Esophagus squamous epithelium (tissue), 5 donors: ENCODE measurements at regions of chr7 and their contacts with region 1.

Region 1: GRCh38 chr7:37181550-37181932 is 267.1 kb downstream of the ELMO1 start:
- DNase-seq: no peak
- H3K4me3 ChIP-seq: no peak overlapping the region
- H3K27ac ChIP-seq: no peak overlapping the region
- H3K4me1 ChIP-seq: peaks cover 0 to 10% (median 2%) of the 10 kb centered on the region in 3 donors
- H3K27me3 ChIP-seq: no peaks in the 10 kb centered on the region
- CTCF ChIP-seq: no peak
- POLR2A ChIP-seq: no peak

Region 2: GRCh38 chr7:36487756-36488336 is 693.7 kb before region 1 on chr7:
- intact Hi-C with region 1: loop called (anchors 5 kb)
- DNase-seq: no peak
- H3K4me3 ChIP-seq: no peak overlapping the region
- H3K27ac ChIP-seq: no peak overlapping the region
- H3K4me1 ChIP-seq: peaks cover 0 to 18% (median 0%) of the 10 kb centered on the region in 3 donors
- H3K27me3 ChIP-seq: peaks cover 0 to under 1% (median 0%) of the 10 kb centered on the region in 4 donors
- CTCF ChIP-seq: peak; percentile 24 to 87 (median 68)
- POLR2A ChIP-seq: no peak

Region 3: GRCh38 chr7:36852017-36852416 is 329.5 kb before region 1 on chr7:
- intact Hi-C with region 1: no loop called
- DNase-seq: no peak
- H3K4me3 ChIP-seq: no peak overlapping the region
- H3K27ac ChIP-seq: no peak overlapping the region
- H3K4me1 ChIP-seq: peaks cover 0 to 20% (median 5%) of the 10 kb centered on the region in 3 donors
- H3K27me3 ChIP-seq: no peaks in the 10 kb centered on the region
- CTCF ChIP-seq: no peak
- POLR2A ChIP-seq: no peak

Region 4: DNA sequence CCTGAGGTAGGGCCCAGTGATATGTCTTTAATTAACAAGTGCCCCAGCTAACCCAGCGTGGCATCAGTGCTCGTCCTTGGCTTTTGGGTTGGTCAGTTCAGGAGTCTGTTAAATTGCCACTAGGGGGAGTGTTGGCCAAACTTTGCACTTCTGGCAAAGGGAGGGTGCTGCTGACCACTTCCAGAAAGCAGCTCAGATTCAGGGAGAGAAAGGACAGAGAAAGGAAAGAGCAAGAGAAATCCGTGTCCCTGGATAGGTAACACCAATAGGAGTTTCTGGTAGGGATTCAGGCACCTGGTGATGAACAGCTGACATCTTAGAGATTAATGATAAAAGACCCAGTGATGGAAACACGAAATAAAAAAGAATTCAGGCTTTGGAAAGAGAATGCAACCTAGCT is 214.2 kb before region 1 on chr7:
- intact Hi-C with region 1: loop called (anchors 5 kb)
- DNase-seq: no peak
- H3K4me3 ChIP-seq: no peak overlapping the region
- H3K27ac ChIP-seq: no peak overlapping the region
- H3K4me1 ChIP-seq: peaks cover 0 to 36% (median 0%) of the 10 kb centered on the region in 3 donors
- H3K27me3 ChIP-seq: no peaks in the 10 kb centered on the region
- CTCF ChIP-seq: peak; percentile 52 to 65 (median 62)
- POLR2A ChIP-seq: no peak

Region 5: DNA sequence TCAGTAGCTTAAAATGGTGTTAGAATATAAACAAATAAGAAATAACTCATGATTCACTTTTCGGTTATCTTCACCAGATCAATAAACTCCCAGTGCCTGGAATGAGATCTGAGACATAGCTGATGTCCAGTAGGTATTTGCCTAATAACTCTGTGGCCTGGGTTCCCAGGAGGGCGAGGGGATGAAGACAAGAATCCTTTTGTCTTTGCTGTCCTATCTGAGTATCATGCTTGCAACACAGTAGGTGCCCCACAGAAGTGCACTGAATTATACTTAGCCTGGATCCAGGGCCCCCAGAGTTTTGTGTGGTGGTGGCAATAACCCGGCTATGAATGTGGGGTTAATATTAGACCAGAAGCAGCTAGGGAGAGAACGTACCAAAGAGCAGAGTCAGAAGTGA is 107.2 kb before region 1 on chr7:
- intact Hi-C with region 1: no loop called
- DNase-seq: no peak
- H3K4me3 ChIP-seq: no peak overlapping the region
- H3K27ac ChIP-seq: no peak overlapping the region
- H3K4me1 ChIP-seq: no peaks in the 10 kb centered on the region
- H3K27me3 ChIP-seq: no peaks in the 10 kb centered on the region
- CTCF ChIP-seq: no peak
- POLR2A ChIP-seq: no peak